ENCODE measurements at regions of chr9 and their contacts with region 1.

Region 1: DNA sequence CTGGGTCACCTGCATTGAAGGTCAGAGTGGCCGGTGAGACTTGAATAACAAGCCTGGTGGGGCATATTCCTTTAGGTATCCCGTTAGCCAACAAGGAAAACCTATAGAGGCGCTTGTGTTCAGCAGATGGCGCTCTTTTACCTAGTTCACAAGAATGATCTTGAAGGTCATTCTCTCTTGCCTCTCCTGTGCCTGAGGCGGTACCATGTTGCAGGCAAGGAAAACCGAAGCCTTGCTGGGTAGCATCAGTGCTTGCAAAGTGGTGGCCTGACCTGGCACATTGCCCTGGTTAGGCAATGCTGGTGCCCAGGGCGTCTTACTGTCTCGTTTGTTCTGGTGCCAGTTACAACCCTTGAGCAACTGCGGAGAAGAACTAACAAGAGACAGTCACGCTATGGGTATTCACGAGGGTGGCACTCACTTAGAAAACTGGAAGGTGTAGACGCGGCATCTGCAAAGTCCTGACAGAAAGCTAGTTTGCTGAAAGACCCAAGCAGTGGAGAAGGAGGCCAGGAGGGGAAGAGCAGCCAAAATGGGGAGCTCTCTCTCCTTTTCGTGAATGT is 56.7 kb downstream of the AOPEP start:
- DNase-seq: peak; percentile 80
- ATAC-seq: peak; percentile 88
- H3K4me3 ChIP-seq: no peak overlapping the region
- H3K27ac ChIP-seq: peak overlapping the region; percentile 98
- H3K4me1 ChIP-seq: peaks cover 2% of the 10 kb centered on the region in 2 donors
- H3K27me3 ChIP-seq: no peaks in the 10 kb centered on the region

Region 2: GRCh38 chr9:94277885-94278536 is 505.2 kb before region 1 on chr9:
- intact Hi-C with region 1: no loop called
- DNase-seq: no peak
- ATAC-seq: no peak
- H3K4me3 ChIP-seq: no peak overlapping the region
- H3K27ac ChIP-seq: no peak overlapping the region
- H3K4me1 ChIP-seq: no peaks in the 10 kb centered on the region
- H3K27me3 ChIP-seq: no peaks in the 10 kb centered on the region

Region 3: GRCh38 chr9:94847486-94847885 is 64.3 kb after region 1 on chr9:
- intact Hi-C with region 1: loop called in 1 of 2 experiments (anchors 10 kb)
- DNase-seq: no peak
- ATAC-seq: no peak
- H3K4me3 ChIP-seq: no peak overlapping the region
- H3K27ac ChIP-seq: no peak overlapping the region
- H3K4me1 ChIP-seq: peaks cover 0 to 11% of the 10 kb centered on the region in 2 donors
- H3K27me3 ChIP-seq: no peaks in the 10 kb centered on the region

Region 4: GRCh38 chr9:94928691-94929372 is 145.6 kb after region 1 on chr9:
- intact Hi-C with region 1: no loop called
- DNase-seq: no peak
- ATAC-seq: no peak
- H3K4me3 ChIP-seq: no peak overlapping the region
- H3K27ac ChIP-seq: no peak overlapping the region
- H3K4me1 ChIP-seq: peaks cover 0 to 2% of the 10 kb centered on the region in 2 donors
- H3K27me3 ChIP-seq: no peaks in the 10 kb centered on the region

Region 5: GRCh38 chr9:95004411-95005277 is 221.5 kb after region 1 on chr9:
- intact Hi-C with region 1: loop called in 1 of 2 experiments (anchors 5 kb)
- DNase-seq: peak; percentile 47 to 86
- ATAC-seq: peak; percentile 42
- H3K4me3 ChIP-seq: peak overlapping the region; percentile 92 to 100
- H3K27ac ChIP-seq: peak overlapping the region; percentile 100
- H3K4me1 ChIP-seq: peaks cover 0 to 4% of the 10 kb centered on the region in 2 donors
- H3K27me3 ChIP-seq: no peaks in the 10 kb centered on the region

Region 6: DNA sequence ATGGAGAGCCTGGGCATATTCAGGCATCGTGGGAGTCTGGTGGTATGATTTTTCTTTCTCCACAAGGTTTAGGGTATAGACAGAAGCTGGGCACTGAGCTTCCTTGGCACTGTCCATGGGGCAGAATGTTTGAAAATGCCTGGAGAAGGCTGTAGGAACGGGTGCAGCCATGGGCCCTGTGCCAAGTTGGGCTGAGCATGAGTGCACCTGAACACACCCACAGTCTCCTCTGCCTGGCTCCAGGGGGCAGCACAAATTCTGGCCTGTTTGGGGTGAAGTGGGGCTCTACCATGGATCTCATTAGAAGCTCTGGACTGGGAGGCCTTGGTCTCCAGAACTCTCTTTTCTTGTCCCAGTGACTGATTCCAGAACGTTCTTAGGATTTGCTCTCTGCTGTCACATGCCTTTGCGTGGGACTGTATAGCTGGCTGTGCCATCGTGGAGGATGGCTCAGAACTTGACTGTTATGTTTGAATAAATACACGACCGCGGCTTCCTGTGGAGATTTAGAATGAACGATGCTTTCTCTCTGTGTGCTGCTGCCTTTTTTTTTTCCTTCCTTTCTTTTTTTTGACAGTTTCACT is 304.6 kb after region 1 on chr9:
- intact Hi-C with region 1: loop called in 1 of 2 experiments (anchors 10 kb)
- DNase-seq: peak; percentile 56 to 77
- ATAC-seq: no peak
- H3K4me3 ChIP-seq: no peak overlapping the region
- H3K27ac ChIP-seq: peak overlapping the region in 1 of 2 donors; percentile 60
- H3K4me1 ChIP-seq: peaks cover 0 to 9% of the 10 kb centered on the region in 2 donors
- H3K27me3 ChIP-seq: no peaks in the 10 kb centered on the region